BJ (cell line): ENCODE measurements at regions of chr6 and their contacts with region 1.

Region 1: DNA sequence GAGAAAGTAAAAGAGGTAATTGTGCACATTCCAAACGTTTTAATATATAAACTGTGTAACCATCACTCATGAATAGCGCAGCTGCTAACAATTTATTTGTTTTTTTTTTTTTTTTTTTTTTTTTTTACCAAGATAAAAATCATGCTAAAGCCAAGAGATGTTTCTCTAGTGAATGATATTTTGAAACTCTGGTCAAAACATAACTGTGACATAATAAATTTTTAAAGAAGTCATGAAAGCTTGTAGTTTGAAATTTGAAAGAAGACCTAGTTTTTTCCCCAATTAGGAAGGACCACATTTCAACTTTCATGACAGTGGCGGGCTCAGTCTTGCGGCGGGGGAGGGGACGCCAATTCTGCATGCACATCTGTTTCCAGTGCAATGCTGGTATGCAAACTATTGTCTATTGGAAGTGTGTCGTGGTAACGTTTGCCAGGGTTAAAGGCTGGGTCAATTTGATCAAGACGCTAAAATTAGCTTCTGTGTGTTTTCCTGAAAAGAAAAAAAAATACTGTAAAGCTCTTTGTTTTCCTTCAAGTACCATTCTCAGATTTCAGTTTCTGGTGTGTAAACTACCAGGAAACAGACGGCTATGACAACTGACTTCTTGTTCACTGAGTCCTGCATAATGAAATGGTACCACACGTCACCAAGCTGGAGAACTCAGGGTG is 211.9 kb downstream of the FOXC1 start:
- DNase-seq: peak; percentile 79
- H3K4me3 ChIP-seq: no peak overlapping the region
- H3K27me3 ChIP-seq: no peaks in the 10 kb centered on the region
- CTCF ChIP-seq: no peak

Region 2: DNA sequence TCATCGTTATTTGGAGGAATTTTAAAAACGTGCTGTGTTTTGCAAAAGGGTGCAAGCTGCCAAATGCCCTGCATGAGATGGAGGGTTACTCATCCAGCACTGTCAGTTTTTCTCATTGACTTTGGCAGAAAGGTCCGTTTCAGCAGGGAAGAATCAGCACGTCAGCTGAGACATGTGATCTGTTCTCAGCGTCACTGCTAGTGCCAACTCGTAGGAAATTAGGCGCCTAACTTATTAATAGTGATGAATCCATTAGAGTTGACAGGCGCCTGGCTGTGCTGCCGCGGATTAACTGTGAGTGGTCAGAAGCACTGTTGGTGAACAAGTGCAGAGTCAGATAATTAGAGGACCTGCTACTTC is 685.3 kb before region 1 on chr6:
- CTCF ChIA-PET with region 1: no interaction called
- POLR2A ChIA-PET with region 1: no interaction called
- DNase-seq: no peak
- H3K4me3 ChIP-seq: no peak overlapping the region
- H3K27me3 ChIP-seq: no peaks in the 10 kb centered on the region
- CTCF ChIP-seq: no peak

Region 3: GRCh38 chr6:1695546-1696462 is 125.8 kb before region 1 on chr6:
- CTCF ChIA-PET with region 1: no interaction called
- POLR2A ChIA-PET with region 1: interaction called, 19 read pairs
- DNase-seq: no peak
- H3K4me3 ChIP-seq: no peak overlapping the region
- H3K27me3 ChIP-seq: no peaks in the 10 kb centered on the region
- CTCF ChIP-seq: no peak

Region 4: DNA sequence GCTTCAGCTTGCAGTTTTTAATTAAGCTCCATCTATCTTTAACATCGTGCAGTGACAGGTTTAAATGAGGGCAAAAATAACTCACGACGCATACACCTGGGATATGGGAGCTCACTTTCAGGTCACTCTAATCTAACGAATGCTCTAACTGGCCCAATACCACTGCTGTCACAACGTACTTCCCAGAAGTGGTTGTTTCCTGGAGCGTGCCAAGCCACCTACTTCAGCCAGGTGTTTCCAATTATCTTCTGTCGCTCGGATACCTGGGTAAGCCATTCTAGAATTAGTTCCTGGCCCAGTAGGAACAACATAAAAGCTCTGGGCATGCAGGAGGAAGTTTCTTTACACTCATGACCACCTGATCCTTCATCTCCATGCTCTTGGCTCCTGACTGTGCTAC is 64.5 kb before region 1 on chr6:
- CTCF ChIA-PET with region 1: no interaction called
- POLR2A ChIA-PET with region 1: interaction called, 10 read pairs
- DNase-seq: no peak
- H3K4me3 ChIP-seq: no peak overlapping the region
- H3K27me3 ChIP-seq: no peaks in the 10 kb centered on the region
- CTCF ChIP-seq: no peak